GM18951 (cell line): ENCODE measurements at regions of chr7 and their contacts with region 1.

Region 1: GRCh38 chr7:20307119-20307518 is 23.6 kb upstream of the ITGB8 start:
- POLR2A ChIP-seq: no peak

Region 2: DNA sequence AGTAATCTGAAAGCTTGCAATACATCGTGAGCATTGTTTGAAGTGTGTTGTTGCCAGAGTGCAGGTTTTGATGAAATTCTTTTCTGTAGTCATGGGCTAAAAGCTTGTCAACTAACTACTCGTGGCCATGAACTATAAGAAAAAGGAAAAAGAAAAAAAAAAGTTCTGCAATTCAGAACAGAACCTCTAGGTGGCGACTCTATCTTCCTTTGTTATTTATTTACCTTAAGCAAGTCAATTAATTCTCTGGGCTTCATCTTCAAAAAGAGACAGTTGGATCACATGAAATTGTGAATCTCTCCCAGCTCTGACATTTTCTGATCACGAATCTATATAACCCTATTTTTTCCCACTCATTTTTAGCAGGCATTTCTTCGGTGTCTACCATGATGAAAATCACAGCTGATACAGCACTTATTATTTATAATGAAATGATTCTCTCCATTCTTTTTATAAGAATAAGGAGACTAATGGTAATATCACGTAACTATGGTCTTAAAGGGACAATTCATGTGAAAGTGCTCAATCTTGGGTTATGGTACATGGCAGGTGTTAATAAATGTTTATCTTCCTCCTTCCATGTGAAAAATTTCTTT is 552.5 kb before region 1 on chr7:
- in situ Hi-C with region 1: loop called (anchors 10 kb)
- POLR2A ChIP-seq: no peak

Region 3: GRCh38 chr7:19982841-19983835 is 324.0 kb before region 1 on chr7:
- in situ Hi-C with region 1: loop called (anchors 10 kb)
- POLR2A ChIP-seq: no peak

Region 4: GRCh38 chr7:20241194-20241910 is 65.8 kb before region 1 on chr7:
- in situ Hi-C with region 1: loop called (anchors 10 kb)
- POLR2A ChIP-seq: no peak